Heart left ventricle (tissue), 16 donors: ENCODE measurements at regions of chr7 and their contacts with region 1.

Region 1: GRCh38 chr7:135147899-135148721 is at the start of gene TMEM140:
- DNase-seq: peak in 2 of 5 donors; percentile 54 to 62
- ATAC-seq: peak; percentile 67 to 89 (median 82)
- H3K4me3 ChIP-seq: peak within 1 kb of the TSS; percentile 24 to 74 (median 60)
- H3K27ac ChIP-seq: peak within 1 kb of the TSS; percentile 88 to 99 (median 93)
- H3K4me1 ChIP-seq: peaks cover 0 to 70% (median 47%) of the 10 kb centered on the region in 12 donors
- H3K27me3 ChIP-seq: no peaks in the 10 kb centered on the region
- CTCF ChIP-seq: peak in 3 of 12 donors; percentile 13 to 27 (median 23)
- POLR2A ChIP-seq: peak in 1 of 2 donors; percentile 71
- total RNA-seq, gene TMEM140: 11.9 to 131 (median 29.5) TPM

Region 2: GRCh38 chr7:134986363-134987251 is 161.5 kb before region 1 on chr7 and contains the start of gene AGBL3:
- intact Hi-C with region 1: loop called in 6 of 10 experiments (anchors 2 to 10 kb)
- DNase-seq: peak; percentile 97 to 99 (median 98)
- ATAC-seq: peak; percentile 98 to 99 (median 99)
- H3K4me3 ChIP-seq: peak within 1 kb of the TSS; percentile 59 to 90 (median 77)
- H3K27ac ChIP-seq: peak within 1 kb of the TSS; percentile 65 to 93 (median 88)
- H3K4me1 ChIP-seq: peaks cover 0 to 32% (median 13%) of the 10 kb centered on the region in 12 donors
- H3K27me3 ChIP-seq: no peaks in the 10 kb centered on the region
- CTCF ChIP-seq: peak; percentile 41 to 90 (median 69)
- POLR2A ChIP-seq: peak in 1 of 2 donors; percentile 62
- total RNA-seq, gene AGBL3: 0.40 to 1.5 (median 0.93) TPM

Region 3: DNA sequence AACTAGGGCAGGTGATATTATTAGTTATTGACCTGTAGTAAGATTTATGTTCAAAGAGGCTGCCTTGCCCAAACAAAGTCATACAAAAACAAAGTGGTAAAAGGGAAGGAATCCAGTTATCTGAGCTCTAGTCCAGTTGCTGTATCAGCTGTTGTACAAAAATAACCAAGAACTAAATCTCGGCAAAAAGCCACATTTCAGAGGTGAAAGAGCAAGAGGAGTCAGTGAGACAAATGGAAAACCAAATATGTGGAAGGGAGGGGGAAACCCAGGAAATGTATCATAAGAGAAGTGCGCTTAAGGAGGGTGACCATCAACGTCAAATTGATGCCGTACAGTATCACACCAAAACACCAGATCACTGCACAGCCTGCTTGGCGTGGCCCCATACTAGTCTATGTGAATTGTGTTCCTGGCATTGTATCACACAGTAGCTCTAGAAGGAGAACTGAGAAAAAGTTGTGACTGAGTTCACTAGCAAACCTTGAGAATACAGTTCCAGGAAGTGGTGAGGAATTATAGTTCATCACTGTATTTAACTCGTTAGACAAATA is 155.4 kb before region 1 on chr7:
- intact Hi-C with region 1: loop called in 6 of 10 experiments (anchors 2 to 10 kb)
- DNase-seq: no peak
- ATAC-seq: peak in 2 of 4 donors; percentile 47 to 82
- H3K4me3 ChIP-seq: no peak overlapping the region
- H3K27ac ChIP-seq: peak overlapping the region in 4 of 12 donors; percentile 10 to 47 (median 37)
- H3K4me1 ChIP-seq: peaks cover 0 to 50% (median 18%) of the 10 kb centered on the region in 12 donors
- H3K27me3 ChIP-seq: no peaks in the 10 kb centered on the region
- CTCF ChIP-seq: no peak
- POLR2A ChIP-seq: no peak

Region 4: DNA sequence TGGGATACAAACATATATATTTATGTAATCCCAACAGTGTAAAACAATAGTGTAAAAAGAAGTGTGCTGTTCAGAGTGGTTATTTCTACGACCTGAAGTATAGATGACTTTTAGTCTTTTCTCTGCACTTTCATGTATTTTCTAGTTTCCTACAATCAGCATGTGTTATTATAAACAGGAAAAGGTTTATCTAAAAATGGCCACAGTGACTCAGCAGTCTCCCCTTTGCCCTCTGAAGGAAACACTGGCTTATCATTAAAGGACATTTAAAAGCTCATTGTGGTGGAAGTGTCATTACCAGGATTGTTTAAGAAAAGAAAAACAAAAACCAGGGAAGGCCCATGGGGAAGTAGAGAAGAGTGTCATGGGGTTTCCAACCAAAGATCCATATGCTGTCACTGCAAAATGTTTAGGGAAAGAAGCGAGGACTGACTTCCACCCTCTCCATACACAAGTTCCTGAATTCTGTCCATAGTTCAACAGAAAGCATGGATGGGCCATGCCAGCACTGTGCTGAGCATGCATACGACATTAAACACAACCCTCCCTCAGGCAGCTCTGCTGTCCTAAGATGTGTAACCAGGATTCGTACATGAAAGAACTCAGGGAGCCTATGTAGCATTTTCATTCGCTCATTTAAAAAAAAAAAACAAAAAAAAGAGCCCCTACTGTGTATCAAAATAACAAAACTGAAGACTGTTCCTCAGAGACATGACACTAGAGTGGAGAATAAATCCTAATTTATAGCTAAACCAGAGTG is 12.2 kb after region 1 on chr7:
- intact Hi-C with region 1: loop called in 1 of 10 experiments (anchors 2 kb)
- DNase-seq: no peak
- ATAC-seq: peak; percentile 18 to 67 (median 36)
- H3K4me3 ChIP-seq: peak overlapping the region in 3 of 12 donors; percentile 5 to 21 (median 6)
- H3K27ac ChIP-seq: peak overlapping the region; percentile 58 to 90 (median 78)
- H3K4me1 ChIP-seq: peaks cover 27 to 74% (median 65%) of the 10 kb centered on the region in 12 donors
- H3K27me3 ChIP-seq: no peaks in the 10 kb centered on the region
- CTCF ChIP-seq: no peak
- POLR2A ChIP-seq: no peak